ENCODE measurements at regions of chr12 and their contacts with region 1.

Region 1: GRCh38 chr12:1939801-1940607 is 21.6 kb upstream of the CACNA2D4 start:
- DNase-seq: peak; percentile 89 to 90
- H3K4me3 ChIP-seq: no peak overlapping the region
- H3K27ac ChIP-seq: peak overlapping the region; percentile 79 to 86
- H3K4me1 ChIP-seq: peaks cover 0 to 38% (median 29%) of the 10 kb centered on the region in 4 donors
- H3K27me3 ChIP-seq: no peaks in the 10 kb centered on the region
- CTCF ChIP-seq: peak; percentile 93 to 98

Region 2: DNA sequence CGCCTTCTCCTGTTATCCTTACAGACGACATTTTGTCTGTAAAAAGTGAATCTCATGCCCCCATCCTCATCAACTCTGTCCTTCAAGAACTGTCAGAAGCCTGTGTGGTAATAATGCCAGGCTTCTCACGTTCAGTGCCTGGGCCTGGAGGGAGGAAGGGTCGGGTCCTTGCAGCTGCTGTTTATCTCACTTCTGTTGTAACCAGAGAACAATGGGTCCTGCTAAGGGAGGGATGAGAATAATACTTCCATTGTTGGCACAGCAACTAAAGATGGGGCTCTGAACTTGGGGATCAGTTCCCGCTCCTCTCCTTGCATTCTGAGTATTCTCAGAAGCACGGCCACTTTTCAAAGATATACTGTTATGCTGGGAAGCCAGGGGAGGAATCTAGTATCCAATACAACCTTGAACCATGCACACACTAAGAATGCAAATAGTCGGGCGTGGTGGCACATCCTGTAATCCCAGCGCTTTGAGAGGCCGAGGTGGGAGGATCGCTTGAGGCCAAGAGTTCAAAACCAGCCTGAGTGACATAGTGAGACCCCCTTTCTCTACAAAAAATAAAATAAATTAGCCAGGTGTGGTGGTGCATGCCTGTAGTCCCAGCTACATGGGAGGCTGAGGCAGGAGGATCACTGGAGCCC is 1238.0 kb before region 1 on chr12:
- intact Hi-C with region 1: no loop called
- DNase-seq: peak in 1 of 2 donors; percentile 17
- H3K4me3 ChIP-seq: no peak overlapping the region
- H3K27ac ChIP-seq: no peak overlapping the region
- H3K4me1 ChIP-seq: no peaks in the 10 kb centered on the region
- H3K27me3 ChIP-seq: no peaks in the 10 kb centered on the region
- CTCF ChIP-seq: no peak

Region 3: DNA sequence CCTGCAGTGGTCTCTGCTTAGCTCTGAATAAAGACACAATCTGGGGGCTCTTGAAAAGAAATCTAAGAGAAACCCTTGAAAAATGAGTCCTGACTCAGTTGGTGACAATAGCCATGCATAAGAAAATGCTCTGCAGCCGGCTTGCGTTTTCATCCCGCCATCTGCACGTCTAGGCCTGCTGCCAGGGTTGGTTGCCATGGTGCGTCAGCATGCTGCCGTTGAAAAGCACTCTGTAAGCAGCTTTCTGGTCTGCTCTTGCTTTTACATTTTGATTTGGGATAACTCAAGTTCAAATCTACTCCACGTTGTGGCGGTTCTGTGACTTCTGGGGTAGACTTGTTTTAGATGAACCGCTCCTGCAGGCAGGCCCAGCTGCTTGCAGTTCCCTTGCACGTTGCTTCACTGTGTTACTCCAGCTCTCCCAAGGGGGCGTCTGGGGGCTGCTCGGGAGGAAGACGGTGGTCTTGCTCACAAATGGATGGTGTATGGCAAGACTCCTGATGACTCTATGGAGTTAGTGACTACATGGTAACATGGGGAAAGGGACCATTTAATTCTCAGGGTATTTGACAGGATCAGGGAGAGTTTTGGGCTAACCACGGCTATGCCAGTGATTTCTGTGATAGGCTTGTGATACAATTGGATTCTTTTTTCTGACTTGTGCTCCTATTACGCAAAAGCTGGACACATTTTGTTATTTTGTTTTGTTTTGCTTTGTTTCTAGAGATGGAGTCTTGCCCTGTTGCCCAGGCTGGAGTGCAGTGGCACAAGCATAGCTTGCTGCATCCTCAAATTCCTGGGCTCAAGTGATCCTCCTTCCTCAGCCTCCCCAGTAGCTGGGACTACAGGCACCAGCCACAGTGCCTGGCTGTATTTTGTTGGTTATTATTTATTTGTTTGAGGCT is 295.2 kb before region 1 on chr12:
- intact Hi-C with region 1: loop called (anchors 10 kb)
- DNase-seq: peak; percentile 79 to 87
- H3K4me3 ChIP-seq: no peak overlapping the region
- H3K27ac ChIP-seq: no peak overlapping the region
- H3K4me1 ChIP-seq: peaks cover 0 to 14% (median 9%) of the 10 kb centered on the region in 4 donors
- H3K27me3 ChIP-seq: no peaks in the 10 kb centered on the region
- CTCF ChIP-seq: no peak

Region 4: GRCh38 chr12:2004113-2004929 is 64.3 kb after region 1 on chr12 and contains the start of gene DCP1B:
- intact Hi-C with region 1: loop called (anchors 5 kb)
- DNase-seq: peak; percentile 97 to 99
- H3K4me3 ChIP-seq: peak within 1 kb of the TSS; percentile 89 to 98
- H3K27ac ChIP-seq: peak within 1 kb of the TSS; percentile 95 to 97
- H3K4me1 ChIP-seq: peaks cover 0 to 31% (median 15%) of the 10 kb centered on the region in 4 donors
- H3K27me3 ChIP-seq: no peaks in the 10 kb centered on the region
- CTCF ChIP-seq: peak in 1 of 2 experiments; percentile 35

Region 5: GRCh38 chr12:2034633-2035430 is 94.8 kb after region 1 on chr12:
- intact Hi-C with region 1: loop called (anchors 5 kb)
- DNase-seq: peak; percentile 76 to 92
- H3K4me3 ChIP-seq: peak overlapping the region; percentile 19 to 49
- H3K27ac ChIP-seq: peak overlapping the region in 1 of 2 donors; percentile 2
- H3K4me1 ChIP-seq: peaks cover 0 to 23% (median 16%) of the 10 kb centered on the region in 4 donors
- H3K27me3 ChIP-seq: no peaks in the 10 kb centered on the region
- CTCF ChIP-seq: peak; percentile 94 to 97